Activated naive CD4-positive, alpha-beta T cell treated with anti-CD3 and anti-CD28 coated beads for 36 hours (primary cell): ENCODE measurements at regions of chr10 and their contacts with region 1.

Region 1: GRCh38 chr10:100148353-100149211 is 37.2 kb downstream of the ERLIN1 start:
- DNase-seq: peak; percentile 81
- H3K4me3 Mint-ChIP-seq: no peak overlapping the region
- H3K27ac Mint-ChIP-seq: peak overlapping the region; percentile 80
- H3K4me1 Mint-ChIP-seq: peaks cover 30% of the 10 kb centered on the region
- H3K27me3 Mint-ChIP-seq: peaks cover 3% of the 10 kb centered on the region

Region 2: DNA sequence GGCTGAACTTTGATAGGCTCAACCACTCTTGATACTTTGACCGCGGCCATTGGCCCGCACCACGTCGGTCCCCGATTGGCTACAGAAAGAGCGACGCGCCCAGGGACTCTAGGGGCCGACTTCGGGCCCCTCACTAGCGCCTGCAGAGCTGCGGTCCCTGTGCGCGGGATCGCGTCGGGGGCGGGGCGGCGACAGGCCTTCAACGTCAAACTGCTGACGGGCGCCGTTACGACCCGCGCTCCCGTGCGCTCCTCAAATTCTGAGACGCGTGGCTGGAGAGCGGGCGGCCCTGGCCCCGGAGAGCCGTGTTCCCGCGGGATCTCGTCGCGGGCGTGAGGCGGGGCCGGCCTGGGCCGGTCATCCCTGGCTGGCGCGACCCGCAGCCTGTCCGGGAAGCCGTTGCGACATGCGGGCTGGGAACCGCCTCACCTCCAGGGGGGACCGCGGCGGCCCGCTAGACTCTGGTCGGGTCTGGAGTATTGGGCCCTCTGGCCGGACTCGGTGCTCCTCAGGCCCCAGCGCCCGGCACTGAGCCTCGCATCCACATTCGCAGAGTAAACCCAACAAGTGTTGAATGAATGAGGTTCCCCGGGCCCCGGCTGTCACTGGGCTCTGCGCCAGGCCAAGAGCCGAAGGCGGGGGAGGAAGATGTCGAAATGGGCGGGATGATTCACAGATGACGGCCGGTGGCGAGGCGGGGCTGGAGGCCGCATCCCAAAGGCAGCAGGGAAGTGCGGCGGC is 527.7 kb before region 1 on chr10:
- CTCF ChIA-PET with region 1: no interaction called
- intact Hi-C with region 1: loop called (anchors 2 kb)
- DNase-seq: peak; percentile 92
- H3K4me3 Mint-ChIP-seq: peak overlapping the region; percentile 84
- H3K27ac Mint-ChIP-seq: peak overlapping the region; percentile 93
- H3K4me1 Mint-ChIP-seq: peaks cover 40% of the 10 kb centered on the region
- H3K27me3 Mint-ChIP-seq: no peaks in the 10 kb centered on the region

Region 3: GRCh38 chr10:99631496-99631895 is 517.1 kb before region 1 on chr10:
- CTCF ChIA-PET with region 1: no interaction called
- intact Hi-C with region 1: no loop called
- DNase-seq: no peak
- H3K4me3 Mint-ChIP-seq: no peak overlapping the region
- H3K27ac Mint-ChIP-seq: no peak overlapping the region
- H3K4me1 Mint-ChIP-seq: no peaks in the 10 kb centered on the region
- H3K27me3 Mint-ChIP-seq: peaks cover 8% of the 10 kb centered on the region

Region 4: DNA sequence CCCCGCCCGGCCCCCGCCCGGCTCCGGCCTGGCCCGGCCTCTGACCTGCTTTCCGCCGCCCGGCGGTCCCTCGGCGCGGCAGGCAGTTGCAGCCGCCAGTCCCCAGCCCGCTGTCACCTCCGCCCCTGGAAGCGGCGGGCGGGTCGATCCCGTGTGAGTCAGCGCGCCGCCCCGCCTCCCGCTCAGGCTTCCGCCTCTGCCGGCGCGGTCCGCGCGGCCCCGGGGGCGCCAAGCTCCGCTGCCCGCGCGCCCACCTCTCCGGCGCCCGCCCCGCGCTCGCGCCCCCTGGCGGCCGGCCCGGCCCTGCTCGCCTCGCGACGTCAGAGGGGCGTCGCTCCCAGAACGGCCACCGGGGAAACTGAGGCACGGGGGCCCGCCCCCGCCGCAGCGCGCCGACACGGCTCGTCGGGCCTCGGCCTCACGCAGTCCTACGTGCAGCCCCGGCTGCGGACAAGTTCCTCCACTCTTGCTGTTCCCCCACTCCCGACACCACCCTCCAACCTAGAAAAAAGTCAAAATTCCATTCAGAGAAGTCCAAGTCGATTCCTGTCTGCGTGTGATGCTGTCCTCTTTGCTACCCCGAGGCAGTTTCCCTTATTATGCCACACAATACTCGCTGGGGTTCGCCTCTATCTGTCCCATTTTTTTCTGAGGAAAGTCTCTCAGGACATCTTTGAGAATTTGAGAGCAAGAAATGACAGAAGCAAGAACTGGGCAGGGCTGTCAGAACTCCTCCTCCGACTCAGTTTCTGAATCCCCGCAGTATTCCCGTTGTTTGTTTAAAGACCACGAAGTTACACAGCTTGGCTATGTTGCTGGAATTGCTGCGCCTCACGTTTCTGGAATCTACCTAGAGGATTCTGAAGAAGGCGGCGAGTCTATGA is 138.5 kb before region 1 on chr10 and contains the start of gene DNMBP:
- CTCF ChIA-PET with region 1: no interaction called
- intact Hi-C with region 1: loop called (anchors 2 kb)
- DNase-seq: peak; percentile 82
- H3K4me3 Mint-ChIP-seq: peak within 1 kb of the TSS; percentile 85
- H3K27ac Mint-ChIP-seq: peak within 1 kb of the TSS; percentile 37
- H3K4me1 Mint-ChIP-seq: peaks cover 38% of the 10 kb centered on the region
- H3K27me3 Mint-ChIP-seq: peaks cover 7% of the 10 kb centered on the region
- total RNA-seq, gene DNMBP: 2.2 to 2.4 TPM

Region 5: DNA sequence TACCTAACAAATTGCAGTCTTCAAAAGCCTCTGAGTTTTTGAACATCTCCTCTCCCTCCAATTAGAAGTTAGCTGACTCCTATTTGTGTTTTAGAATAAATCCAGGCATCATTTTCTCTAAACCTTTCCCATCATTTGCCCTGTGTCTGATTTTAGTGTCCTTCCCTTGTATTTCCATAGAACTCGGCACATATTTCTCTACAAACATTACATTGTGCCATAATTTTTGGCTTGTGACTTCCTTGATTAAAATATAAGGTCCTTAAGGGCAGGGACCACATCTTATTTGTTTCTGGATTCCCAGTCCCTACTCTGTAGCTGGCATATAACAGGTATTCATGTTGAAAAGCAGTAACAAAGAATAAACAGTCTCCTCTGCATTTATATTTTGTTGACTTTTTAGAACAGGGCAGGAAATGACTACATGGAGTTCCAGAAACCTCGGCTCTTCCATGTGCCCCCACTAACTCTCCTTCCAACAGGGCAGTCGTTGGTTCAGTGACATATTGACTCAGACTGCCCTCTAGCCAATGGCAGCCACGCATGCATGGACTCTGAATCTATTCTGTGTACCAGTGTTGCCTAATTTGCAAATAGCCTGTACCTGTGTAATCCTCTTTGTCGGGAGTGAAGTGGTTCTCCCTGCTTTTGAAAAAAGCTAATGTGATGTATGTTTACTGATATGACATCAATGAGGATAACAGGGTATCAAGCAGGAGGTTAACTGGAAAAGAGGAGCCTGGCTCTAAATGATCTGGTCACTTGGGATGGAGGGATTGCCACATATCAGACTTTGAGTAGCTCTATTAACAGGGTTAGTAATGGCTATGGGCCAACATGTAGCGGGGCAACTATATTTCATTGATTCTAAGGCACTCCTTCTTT is 47.1 kb before region 1 on chr10:
- CTCF ChIA-PET with region 1: no interaction called
- intact Hi-C with region 1: no loop called
- DNase-seq: no peak
- H3K4me3 Mint-ChIP-seq: no peak overlapping the region
- H3K27ac Mint-ChIP-seq: no peak overlapping the region
- H3K4me1 Mint-ChIP-seq: no peaks in the 10 kb centered on the region
- H3K27me3 Mint-ChIP-seq: peaks cover 49% of the 10 kb centered on the region

Region 6: DNA sequence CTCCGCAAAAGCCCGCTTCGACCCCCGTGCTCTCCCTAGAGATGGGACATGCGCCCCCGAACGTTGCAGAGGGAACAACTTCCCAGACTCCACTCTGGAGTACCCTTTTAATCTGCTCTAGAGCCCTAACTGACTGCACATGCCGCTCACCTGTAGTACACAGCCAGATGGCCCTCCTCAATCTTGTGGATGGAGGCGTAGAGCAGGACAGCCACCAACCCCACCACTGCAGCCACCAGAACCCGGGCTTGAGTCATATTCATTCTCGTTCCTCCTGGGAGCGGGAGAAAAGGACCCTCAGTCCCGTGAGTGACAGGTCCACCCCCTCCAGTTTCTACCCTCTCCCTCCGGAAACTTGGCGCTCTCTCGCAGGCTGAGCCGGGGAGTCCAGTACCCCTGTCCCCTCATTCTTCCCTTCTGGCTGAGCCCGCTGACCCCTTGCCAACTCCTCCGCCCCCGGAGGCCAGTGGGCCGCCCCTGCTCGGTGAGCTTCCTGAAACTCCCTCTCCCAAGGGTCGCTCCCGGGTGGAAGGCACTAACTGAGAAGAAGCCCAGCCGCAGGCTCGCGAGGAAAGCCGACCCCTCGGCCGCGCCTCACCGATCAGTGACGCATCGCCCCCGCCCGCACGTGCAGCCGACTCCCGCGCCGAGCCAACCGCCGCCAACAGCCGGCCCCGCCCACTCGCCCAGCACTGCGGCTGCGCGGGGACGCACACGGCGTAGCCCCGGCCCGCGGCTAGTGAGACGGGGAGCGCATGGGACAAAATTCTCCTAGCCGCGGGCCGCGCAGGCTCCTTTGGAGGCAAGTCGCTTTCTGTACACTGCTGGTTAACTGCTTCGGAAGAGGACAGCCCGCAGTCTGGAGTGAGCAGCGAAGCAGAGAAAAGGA is 37.0 kb after region 1 on chr10 and contains the start of gene ERLIN1:
- CTCF ChIA-PET with region 1: no interaction called
- intact Hi-C with region 1: loop called (anchors 1 kb)
- DNase-seq: peak; percentile 95
- H3K4me3 Mint-ChIP-seq: peak within 1 kb of the TSS; percentile 96
- H3K27ac Mint-ChIP-seq: peak within 1 kb of the TSS; percentile 95
- H3K4me1 Mint-ChIP-seq: peaks cover 58% of the 10 kb centered on the region
- H3K27me3 Mint-ChIP-seq: no peaks in the 10 kb centered on the region
- total RNA-seq, gene ERLIN1: 18.4 to 18.7 TPM

Region 7: DNA sequence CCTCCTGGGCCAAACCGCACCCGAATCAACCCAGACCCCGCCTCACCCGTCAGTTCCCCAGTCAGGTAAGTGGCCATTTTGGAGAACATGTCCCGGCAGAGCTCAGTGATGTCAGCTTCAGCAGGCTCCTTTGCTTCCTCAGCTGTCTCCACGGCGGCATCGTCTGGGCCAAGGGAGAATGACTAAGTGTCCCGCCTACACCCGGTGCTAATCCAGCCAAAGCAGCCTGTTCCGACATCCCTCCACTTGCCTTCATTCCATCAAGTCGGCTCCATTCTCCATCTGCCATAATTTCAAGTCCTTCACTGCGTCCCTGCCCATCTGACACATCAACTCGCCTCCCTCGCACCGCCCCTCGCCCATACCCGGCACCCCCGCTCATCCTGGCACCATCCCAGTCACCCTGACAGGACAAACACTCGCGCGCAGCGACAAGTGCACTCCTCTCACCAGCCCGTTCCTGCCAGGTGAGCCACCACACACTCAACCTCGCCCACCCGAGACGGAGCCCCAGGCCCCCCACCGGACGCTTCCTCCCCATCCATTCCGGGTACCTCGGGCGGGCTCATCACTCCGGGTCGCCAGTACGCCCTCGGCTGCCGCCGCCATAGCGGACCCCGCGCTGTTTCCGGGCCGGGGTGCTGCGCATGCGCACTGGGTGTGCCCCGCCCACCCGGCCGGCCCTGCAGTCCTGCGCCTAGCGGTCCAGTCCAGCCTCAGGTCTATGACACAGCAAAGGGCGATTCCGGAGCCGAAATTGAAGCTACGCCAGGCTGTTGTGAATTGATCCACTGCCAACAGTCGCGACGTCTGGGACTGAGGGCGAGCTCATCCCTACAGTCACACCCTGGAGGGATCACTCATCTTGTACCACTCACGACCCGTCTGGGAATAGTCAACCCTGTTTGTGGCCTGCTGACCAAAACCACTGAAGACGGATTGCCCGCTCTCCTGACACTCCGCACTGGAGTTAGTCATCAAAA is 137.8 kb after region 1 on chr10 and contains the start of gene BLOC1S2:
- CTCF ChIA-PET with region 1: no interaction called
- intact Hi-C with region 1: loop called (anchors 1 kb)
- DNase-seq: peak; percentile 87
- H3K4me3 Mint-ChIP-seq: peak within 1 kb of the TSS; percentile 99
- H3K27ac Mint-ChIP-seq: peak within 1 kb of the TSS; percentile 98
- H3K4me1 Mint-ChIP-seq: peaks cover 25% of the 10 kb centered on the region
- H3K27me3 Mint-ChIP-seq: no peaks in the 10 kb centered on the region
- total RNA-seq, gene BLOC1S2: 68.5 to 69.1 TPM

Region 8: GRCh38 chr10:100508691-100509150 is 360.1 kb after region 1 on chr10:
- CTCF ChIA-PET with region 1: no interaction called
- intact Hi-C with region 1: loop called (anchors 5 kb)
- DNase-seq: peak; percentile 68
- H3K4me3 Mint-ChIP-seq: peak overlapping the region; percentile 50
- H3K27ac Mint-ChIP-seq: peak overlapping the region; percentile 89
- H3K4me1 Mint-ChIP-seq: peaks cover 70% of the 10 kb centered on the region
- H3K27me3 Mint-ChIP-seq: no peaks in the 10 kb centered on the region